OCI-LY7 (cell line): ENCODE measurements at regions of chr4 and their contacts with region 1.

Region 1: GRCh38 chr4:78799551-78800495 is 23.7 kb downstream of the BMP2K start:
- DNase-seq: no peak
- H3K4me3 ChIP-seq: no peak overlapping the region
- H3K27ac ChIP-seq: no peak overlapping the region
- H3K4me1 ChIP-seq: peaks cover 41% of the 10 kb centered on the region
- CTCF ChIP-seq: no peak

Region 2: DNA sequence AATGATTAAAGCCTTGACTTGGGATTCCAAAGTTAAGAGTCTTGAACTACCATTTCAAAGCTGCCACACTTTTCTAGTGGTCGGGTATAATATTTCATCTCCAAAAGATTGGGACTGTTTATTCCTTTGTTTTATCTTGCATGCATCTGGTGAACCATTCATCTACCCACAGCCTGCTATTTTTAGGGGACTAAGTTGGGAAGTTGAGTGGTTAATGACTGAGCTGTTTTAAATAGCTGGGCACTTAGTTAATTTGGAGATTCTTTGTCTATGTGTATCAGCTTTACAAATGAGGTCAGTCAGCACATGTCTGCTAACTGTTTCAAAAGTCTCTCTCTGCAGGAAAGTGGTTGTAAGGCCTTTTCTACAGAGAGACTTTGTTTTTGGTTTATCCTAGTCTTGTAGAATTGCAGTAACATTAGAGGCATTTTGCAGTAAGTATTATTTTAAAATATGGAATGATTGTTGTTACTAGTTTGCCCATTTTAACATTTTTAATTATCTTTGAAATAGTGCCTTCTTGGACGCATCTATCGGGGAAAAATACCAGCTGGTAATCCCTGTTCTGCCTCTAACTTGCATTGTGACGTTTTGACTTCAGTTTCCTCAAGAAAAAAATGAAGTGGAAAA is 15.5 kb before region 1 on chr4:
- CTCF ChIA-PET with region 1: no interaction called
- POLR2A ChIA-PET with region 1: interaction called, 14 read pairs
- intact Hi-C with region 1: no loop called
- DNase-seq: no peak
- H3K4me3 ChIP-seq: no peak overlapping the region
- H3K27ac ChIP-seq: no peak overlapping the region
- H3K4me1 ChIP-seq: peaks cover 39% of the 10 kb centered on the region
- CTCF ChIP-seq: no peak

Region 3: GRCh38 chr4:78809928-78810835 is 10.4 kb after region 1 on chr4:
- CTCF ChIA-PET with region 1: no interaction called
- POLR2A ChIA-PET with region 1: interaction called, 37 read pairs
- intact Hi-C with region 1: no loop called
- DNase-seq: no peak
- H3K4me3 ChIP-seq: no peak overlapping the region
- H3K27ac ChIP-seq: no peak overlapping the region
- H3K4me1 ChIP-seq: peaks cover 39% of the 10 kb centered on the region
- CTCF ChIP-seq: no peak

Region 4: GRCh38 chr4:79476196-79476595 is 676.4 kb after region 1 on chr4:
- CTCF ChIA-PET with region 1: no interaction called
- POLR2A ChIA-PET with region 1: no interaction called
- intact Hi-C with region 1: no loop called
- DNase-seq: no peak
- H3K4me3 ChIP-seq: no peak overlapping the region
- H3K27ac ChIP-seq: no peak overlapping the region
- H3K4me1 ChIP-seq: no peaks in the 10 kb centered on the region
- CTCF ChIP-seq: no peak